ENCODE measurements at regions of chr1 and their contacts with region 1.

Region 1: DNA sequence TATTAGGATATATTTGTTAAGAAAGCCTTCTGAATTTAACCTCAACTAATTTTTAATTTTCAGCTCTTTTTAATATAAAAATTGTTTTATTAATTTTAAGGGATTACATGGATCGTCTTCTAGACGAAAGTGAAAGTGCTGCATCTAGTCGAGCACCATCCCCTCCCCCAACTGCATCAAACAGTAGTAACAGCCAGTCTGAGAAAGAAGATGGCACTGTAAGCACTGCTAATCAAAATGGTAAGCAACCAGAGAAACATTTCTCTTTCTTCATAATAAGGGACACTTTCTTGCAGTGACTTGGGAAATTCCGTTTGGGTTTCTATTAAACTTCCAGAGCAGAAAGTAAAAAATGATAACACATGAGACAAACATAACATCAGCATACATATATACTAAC is 56.9 kb downstream of the MIER1 start:
- DNase-seq: peak; percentile 41
- H3K4me3 Mint-ChIP-seq: peak overlapping the region; percentile 69
- H3K27ac Mint-ChIP-seq: peak overlapping the region; percentile 69
- H3K4me1 Mint-ChIP-seq: peaks cover 27% of the 10 kb centered on the region
- H3K27me3 Mint-ChIP-seq: no peaks in the 10 kb centered on the region

Region 2: DNA sequence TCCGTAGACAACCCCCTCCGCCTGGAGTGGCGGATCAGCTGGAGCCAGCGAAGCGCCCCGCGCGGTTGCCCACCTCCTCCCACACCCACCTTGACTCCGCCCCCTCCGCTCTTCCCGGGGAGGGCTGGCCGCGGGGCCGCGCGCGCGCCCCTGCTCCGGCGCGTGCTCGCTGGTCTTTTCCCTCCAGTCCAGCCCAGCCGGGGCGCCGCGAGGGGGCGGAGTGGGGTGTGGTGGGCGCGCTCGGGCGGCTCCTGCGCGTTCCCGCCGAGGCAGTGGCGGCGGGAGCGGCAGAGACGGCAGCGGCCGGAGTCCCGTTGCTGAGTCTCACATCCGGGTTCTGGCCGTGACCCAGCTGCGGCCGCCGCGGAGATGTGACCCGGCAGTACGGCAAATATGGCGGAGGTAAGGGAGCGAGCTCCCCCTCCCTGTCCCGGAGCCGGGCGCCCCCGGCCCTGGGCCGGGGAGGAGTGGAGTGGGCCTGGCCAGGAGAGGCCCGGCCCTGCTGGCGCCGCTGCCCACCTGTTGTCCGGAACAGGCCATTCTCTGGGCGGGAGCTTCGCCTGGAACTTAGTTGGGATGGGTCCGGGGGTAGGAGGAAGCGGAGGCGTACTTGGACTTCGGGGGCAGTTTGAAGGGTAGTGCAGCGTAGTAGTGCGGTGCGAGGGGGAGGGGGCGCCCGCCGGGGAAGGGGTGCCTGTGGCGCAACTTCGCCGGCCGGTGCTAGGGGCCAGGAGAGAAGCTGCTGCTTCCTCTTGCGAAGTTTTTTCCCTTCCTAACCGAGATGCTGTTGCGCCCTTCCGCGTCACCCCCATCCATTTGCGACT is 51.5 kb before region 1 on chr1:
- intact Hi-C with region 1: loop called (anchors 2 kb)
- DNase-seq: peak; percentile 93
- H3K4me3 Mint-ChIP-seq: peak overlapping the region; percentile 90
- H3K27ac Mint-ChIP-seq: peak overlapping the region; percentile 91
- H3K4me1 Mint-ChIP-seq: peaks cover 55% of the 10 kb centered on the region
- H3K27me3 Mint-ChIP-seq: no peaks in the 10 kb centered on the region

Region 3: DNA sequence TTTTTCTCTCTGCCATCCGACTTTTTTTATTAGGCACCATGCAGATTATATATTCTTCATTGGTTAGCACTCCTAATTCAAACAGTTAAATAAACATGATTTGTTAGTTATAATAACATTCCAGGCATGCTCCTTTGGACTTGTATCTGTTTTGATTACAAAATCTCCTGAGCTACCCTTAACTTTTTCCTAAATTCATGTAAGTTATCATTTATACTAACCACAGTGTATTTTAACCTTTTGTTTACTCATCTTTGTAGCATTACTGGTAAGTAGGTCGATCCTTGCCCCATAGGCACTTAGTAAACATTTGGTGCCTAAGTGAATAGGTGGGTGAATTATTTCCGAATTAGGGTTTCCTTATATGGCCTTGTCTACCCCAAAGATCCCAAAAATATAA is 13.1 kb before region 1 on chr1:
- intact Hi-C with region 1: loop called (anchors 2 kb)
- DNase-seq: no peak
- H3K4me3 Mint-ChIP-seq: no peak overlapping the region
- H3K27ac Mint-ChIP-seq: no peak overlapping the region
- H3K4me1 Mint-ChIP-seq: peaks cover 21% of the 10 kb centered on the region
- H3K27me3 Mint-ChIP-seq: no peaks in the 10 kb centered on the region